ENCODE measurements at regions of chr12 and their contacts with region 1.

Region 1: GRCh38 chr12:10012630-10013330 is 2.4 kb downstream of the CLEC12B start:
- DNase-seq: no peak
- H3K4me3 ChIP-seq: no peak overlapping the region
- H3K27ac ChIP-seq: no peak overlapping the region
- H3K27me3 ChIP-seq: no peaks in the 10 kb centered on the region
- CTCF ChIP-seq: no peak

Region 2: DNA sequence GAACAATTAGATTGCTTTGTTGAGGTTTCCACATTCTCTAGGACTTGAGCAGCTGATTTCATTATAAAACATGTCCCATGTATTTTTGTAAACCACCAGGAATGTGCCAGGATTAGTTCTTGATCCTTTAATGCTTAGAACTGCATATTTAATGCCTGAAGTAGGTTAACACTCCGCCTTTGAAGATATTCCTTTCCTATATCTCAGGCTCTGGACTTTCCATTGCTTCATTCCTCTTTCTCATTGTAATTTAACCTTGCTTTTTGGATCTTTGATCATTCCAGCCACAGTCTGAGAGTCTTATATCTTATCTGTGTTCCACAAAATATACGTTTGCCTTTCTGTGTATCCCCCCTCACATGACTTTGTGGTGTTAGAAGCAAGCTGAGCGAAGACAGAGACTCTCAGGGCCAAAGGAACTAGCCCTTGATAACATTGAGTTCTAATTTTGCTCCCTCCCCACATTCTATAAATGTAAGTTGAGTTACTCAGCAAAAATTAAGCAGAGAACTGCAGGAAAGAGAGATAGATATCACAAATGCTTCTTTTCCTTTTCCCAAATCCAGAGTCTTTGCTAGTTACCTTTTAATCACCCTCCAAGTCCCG is 11.5 kb before region 1 on chr12:
- CTCF ChIA-PET with region 1: interaction called, 17 read pairs
- POLR2A ChIA-PET with region 1: no interaction called
- DNase-seq: no peak
- H3K4me3 ChIP-seq: no peak overlapping the region
- H3K27ac ChIP-seq: no peak overlapping the region
- H3K27me3 ChIP-seq: no peaks in the 10 kb centered on the region
- CTCF ChIP-seq: no peak

Region 3: DNA sequence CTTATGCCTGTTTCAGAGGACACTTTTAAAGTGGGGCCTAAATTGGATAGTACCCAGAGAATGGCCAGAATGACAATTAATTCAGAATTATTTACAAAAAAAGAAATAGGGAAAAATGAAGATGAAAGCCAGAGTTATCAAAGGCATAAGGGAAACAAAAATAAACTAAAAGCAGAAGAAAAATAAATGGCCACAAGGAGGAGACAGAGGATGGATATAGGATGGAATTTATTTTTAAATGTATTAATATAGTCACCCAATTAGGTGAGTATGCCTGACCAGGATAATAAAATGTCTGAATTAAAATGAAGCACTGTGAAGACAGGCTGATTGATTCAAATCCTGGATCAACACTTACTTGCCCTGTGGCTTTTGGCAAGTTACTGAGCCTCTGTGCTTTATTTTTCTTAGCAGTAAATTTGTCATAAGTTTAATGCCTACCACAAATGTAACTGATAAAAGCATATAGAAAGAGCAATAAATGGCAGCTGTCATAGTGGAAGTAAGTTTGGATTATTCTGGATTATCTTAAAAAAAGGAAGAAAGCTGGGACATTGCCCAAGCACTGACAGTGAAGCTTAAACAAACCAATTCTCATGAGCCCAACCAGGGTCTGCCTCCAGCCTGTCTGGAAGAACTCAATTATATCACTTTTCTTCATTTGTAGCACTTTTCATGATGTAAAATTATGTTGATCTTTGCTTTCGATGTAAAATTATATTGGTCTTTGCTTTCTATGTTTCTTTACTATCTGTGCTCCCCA is 21.2 kb after region 1 on chr12:
- CTCF ChIA-PET with region 1: interaction called, 16 read pairs
- POLR2A ChIA-PET with region 1: interaction called, 6 read pairs
- DNase-seq: no peak
- H3K4me3 ChIP-seq: no peak overlapping the region
- H3K27ac ChIP-seq: no peak overlapping the region
- H3K27me3 ChIP-seq: no peaks in the 10 kb centered on the region
- CTCF ChIP-seq: peak; percentile 55

Measured in AG04450 (cell line).